ENCODE measurements at regions of chr7 and their contacts with region 1.

Region 1: GRCh38 chr7:39894904-39895303 is 55.2 kb upstream of the CDK13 start:
- DNase-seq: no peak
- H3K4me3 ChIP-seq: no peak overlapping the region
- H3K27ac ChIP-seq: no peak overlapping the region
- H3K4me1 ChIP-seq: no peaks in the 10 kb centered on the region; a peak in 1 of 4 replicates
- H3K27me3 ChIP-seq: peaks cover 18% of the 10 kb centered on the region; the same call in 1 of the 2 replicates
- CTCF ChIP-seq: no peak
- EP300 ChIP-seq: no peak
- RAD21 ChIP-seq: no peak

Region 2: DNA sequence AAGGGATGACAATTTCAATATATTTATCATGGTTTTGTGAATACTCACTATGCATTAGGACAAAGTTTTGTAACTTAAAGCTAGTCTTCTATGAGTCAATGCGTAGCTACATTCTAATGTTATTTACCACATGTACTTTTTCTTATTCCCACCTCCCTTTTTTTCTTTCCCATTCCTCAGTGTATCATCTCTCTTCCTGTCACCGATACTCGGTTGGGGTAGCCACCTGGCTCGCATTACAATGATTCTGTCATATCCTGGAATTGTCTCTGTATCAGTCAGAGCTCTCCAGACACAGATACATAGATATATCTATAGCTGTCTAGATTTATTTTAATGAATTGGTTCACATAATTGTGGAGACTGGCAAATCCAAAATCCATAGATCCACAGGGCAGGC is 281.3 kb before region 1 on chr7:
- CTCF ChIA-PET with region 1: no interaction called
- POLR2A ChIA-PET with region 1: no interaction called
- DNase-seq: peak; percentile 43
- H3K4me3 ChIP-seq: no peak overlapping the region
- H3K27ac ChIP-seq: peak overlapping the region in 1 of 2 experiments; percentile 73; a peak in 3 of 4 replicates
- H3K4me1 ChIP-seq: peaks cover 16 to 46% of the 10 kb centered on the region in 2 experiments
- H3K27me3 ChIP-seq: no peaks in the 10 kb centered on the region
- CTCF ChIP-seq: no peak
- EP300 ChIP-seq: peak; percentile 11 to 89; a peak in 3 of 4 replicates
- RAD21 ChIP-seq: no peak

Region 3: DNA sequence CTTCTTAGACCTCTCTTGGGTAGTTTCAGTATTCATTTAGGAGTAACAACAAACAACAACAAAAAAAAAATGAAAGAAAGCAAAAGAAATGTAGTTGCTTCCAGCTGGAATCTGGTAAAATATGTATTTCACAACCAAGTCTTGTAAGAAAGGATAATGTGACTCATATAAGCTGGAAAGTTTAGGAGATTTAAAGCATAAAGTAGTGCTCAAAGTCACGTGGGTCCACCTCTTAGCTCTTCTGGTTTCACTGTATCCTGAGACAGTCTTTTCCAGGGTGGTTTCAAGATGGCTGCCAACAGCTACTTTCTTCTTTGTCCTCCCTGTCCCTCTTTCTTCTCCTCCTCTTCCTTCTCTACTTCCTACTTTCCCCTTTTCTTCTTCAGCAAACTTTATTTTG is 14.3 kb before region 1 on chr7:
- CTCF ChIA-PET with region 1: interaction called, 45 read pairs
- POLR2A ChIA-PET with region 1: no interaction called
- DNase-seq: no peak
- H3K4me3 ChIP-seq: no peak overlapping the region
- H3K27ac ChIP-seq: no peak overlapping the region
- H3K4me1 ChIP-seq: no peaks in the 10 kb centered on the region
- H3K27me3 ChIP-seq: no peaks in the 10 kb centered on the region; the same call in 1 of the 2 replicates
- CTCF ChIP-seq: no peak
- EP300 ChIP-seq: no peak
- RAD21 ChIP-seq: no peak

Region 4: DNA sequence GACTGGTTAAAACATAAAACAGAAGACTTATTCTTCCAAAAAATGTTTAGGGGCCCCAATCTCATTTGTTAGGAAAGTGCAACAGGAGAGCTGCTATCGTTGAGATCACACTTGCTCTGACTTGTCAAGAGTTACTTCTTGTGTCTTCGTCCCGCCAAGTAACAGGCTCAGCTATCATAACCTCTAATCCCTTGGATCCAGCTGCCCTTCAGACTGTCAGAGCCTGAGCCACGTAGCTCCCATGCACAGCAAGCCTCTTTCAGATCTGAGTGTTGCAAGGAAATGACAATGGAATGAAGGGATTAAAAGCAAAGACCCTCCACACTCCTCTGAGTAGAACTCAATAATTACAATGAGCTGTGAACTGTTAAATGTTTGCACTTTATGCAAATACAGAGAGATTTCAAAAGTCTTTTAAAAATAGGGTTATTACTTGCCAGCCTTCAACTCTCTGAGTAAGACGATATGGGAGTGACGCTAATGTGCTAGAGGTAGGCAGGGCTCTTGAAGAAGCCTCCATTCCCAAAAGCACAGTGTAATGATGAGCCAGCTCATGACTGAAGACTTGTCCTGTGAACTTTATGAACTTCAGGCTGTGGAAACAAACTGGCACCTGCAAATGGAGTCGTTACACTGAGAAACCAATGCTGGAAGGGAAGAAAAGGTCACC is 26.7 kb after region 1 on chr7:
- CTCF ChIA-PET with region 1: interaction called, 23 read pairs
- POLR2A ChIA-PET with region 1: no interaction called
- DNase-seq: no peak
- H3K4me3 ChIP-seq: no peak overlapping the region
- H3K27ac ChIP-seq: no peak overlapping the region
- H3K4me1 ChIP-seq: no peaks in the 10 kb centered on the region
- H3K27me3 ChIP-seq: peaks cover 16% of the 10 kb centered on the region
- CTCF ChIP-seq: no peak
- EP300 ChIP-seq: no peak
- RAD21 ChIP-seq: no peak

Region 5: GRCh38 chr7:40015790-40016296 is 120.9 kb after region 1 on chr7:
- CTCF ChIA-PET with region 1: interaction called, 10 read pairs
- POLR2A ChIA-PET with region 1: no interaction called
- DNase-seq: peak; percentile 41
- H3K4me3 ChIP-seq: no peak overlapping the region
- H3K27ac ChIP-seq: peak overlapping the region; percentile 13 to 56; a peak in 3 of 4 replicates
- H3K4me1 ChIP-seq: peaks cover 5 to 8% of the 10 kb centered on the region in 2 experiments; a peak in 2 of 4 replicates
- H3K27me3 ChIP-seq: no peaks in the 10 kb centered on the region
- CTCF ChIP-seq: no peak
- EP300 ChIP-seq: no peak
- RAD21 ChIP-seq: no peak

Region 6: GRCh38 chr7:40072268-40072667 is 177.4 kb after region 1 on chr7:
- CTCF ChIA-PET with region 1: interaction called, 11 read pairs
- POLR2A ChIA-PET with region 1: no interaction called
- DNase-seq: no peak
- H3K4me3 ChIP-seq: no peak overlapping the region
- H3K27ac ChIP-seq: no peak overlapping the region
- H3K4me1 ChIP-seq: no peaks in the 10 kb centered on the region
- H3K27me3 ChIP-seq: no peaks in the 10 kb centered on the region
- CTCF ChIP-seq: no peak
- EP300 ChIP-seq: no peak
- RAD21 ChIP-seq: no peak

Measured in SK-N-SH (cell line).